ENCODE measurements at regions of chr6 and their contacts with region 1.

Region 1: DNA sequence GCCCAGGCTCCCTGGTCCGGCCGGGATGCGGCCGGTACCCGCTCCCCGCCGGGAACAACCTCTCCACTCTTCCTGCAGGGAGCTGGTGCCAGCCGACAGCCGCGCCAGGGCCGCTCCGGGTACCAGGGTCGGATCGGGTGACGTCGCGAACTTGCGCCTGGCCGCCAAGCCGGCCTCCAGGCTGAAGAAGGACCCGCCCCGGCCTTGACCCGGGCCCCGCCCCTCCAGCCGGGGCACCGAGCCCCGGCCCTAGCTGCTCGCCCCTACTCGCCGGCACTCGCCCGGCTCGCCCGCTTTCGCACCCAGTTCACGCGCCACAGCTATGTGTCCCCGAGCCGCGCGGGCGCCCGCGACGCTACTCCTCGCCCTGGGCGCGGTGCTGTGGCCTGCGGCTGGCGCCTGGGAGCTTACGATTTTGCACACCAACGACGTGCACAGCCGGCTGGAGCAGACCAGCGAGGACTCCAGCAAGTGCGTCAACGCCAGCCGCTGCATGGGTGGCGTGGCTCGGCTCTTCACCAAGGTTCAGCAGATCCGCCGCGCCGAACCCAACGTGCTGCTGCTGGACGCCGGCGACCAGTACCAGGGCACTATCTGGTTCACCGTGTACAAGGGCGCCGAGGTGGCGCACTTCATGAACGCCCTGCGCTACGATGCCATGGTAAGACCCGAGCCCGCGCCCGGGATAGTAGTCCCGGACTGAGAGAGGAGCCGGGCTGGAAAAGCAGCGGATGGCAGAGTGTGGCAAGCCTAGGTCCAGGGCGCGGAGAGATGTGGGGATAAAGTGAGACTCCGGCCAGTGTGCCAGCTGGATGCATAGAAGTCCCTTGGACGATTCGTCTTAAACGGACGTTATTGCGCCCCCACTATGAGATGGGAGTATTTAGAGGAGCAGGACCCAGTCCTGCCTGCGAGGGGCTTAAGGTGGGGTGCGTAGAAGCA is at the start of gene NT5E:
- DNase-seq: peak; percentile 3 to 67 (median 57)
- H3K4me3 ChIP-seq: peak within 1 kb of the TSS; percentile 64
- H3K4me3 Mint-ChIP-seq: peak within 1 kb of the TSS; percentile 90 to 97 (median 95)
- H3K27ac ChIP-seq: peak within 1 kb of the TSS; percentile 58
- H3K27ac Mint-ChIP-seq: peak within 1 kb of the TSS; percentile 55 to 95 (median 90)
- H3K4me1 ChIP-seq: peaks cover 25% of the 10 kb centered on the region
- H3K4me1 Mint-ChIP-seq: peaks cover 54 to 72% (median 67%) of the 10 kb centered on the region in 3 donors
- H3K27me3 ChIP-seq: peaks cover 13% of the 10 kb centered on the region
- H3K27me3 Mint-ChIP-seq: peaks cover 28 to 38% of the 10 kb centered on the region in 2 donors
- total RNA-seq, gene NT5E: 14.8 to 15.4 TPM

Region 2: DNA sequence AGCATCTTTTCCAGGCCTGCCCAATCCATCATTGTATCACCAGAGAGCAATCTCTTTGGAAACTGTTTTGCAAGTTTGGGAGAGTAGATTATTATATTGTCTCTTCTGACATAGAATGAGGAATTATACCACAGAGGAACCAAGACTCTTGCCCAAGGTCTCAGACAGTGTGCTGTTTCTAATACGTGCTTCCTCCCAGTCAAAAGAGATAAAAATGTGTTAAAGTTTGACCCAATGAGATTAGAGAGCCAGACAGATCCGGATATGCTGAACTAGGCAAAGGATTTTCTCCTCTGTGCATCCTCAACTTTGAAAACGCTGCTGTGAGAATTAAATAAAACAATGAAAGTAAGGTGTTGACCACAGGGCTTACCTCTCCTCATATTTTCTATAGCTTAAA is 18.8 kb before region 1 on chr6:
- CTCF ChIA-PET with region 1: interaction called, 11 read pairs
- POLR2A ChIA-PET with region 1: no interaction called
- DNase-seq: no peak
- H3K4me3 ChIP-seq: no peak overlapping the region
- H3K4me3 Mint-ChIP-seq: no peak overlapping the region
- H3K27ac ChIP-seq: no peak overlapping the region
- H3K27ac Mint-ChIP-seq: peak overlapping the region in 2 of 8 donors; percentile 22 to 52
- H3K4me1 ChIP-seq: no peaks in the 10 kb centered on the region
- H3K4me1 Mint-ChIP-seq: peaks cover 0 to 7% (median 0%) of the 10 kb centered on the region in 3 donors
- H3K27me3 ChIP-seq: no peaks in the 10 kb centered on the region
- H3K27me3 Mint-ChIP-seq: peaks cover 2 to 5% of the 10 kb centered on the region in 2 donors

Region 3: GRCh38 chr6:85460921-85461797 is 11.1 kb after region 1 on chr6:
- CTCF ChIA-PET with region 1: interaction called, 25 read pairs
- POLR2A ChIA-PET with region 1: interaction called, 27 read pairs
- DNase-seq: peak; percentile 8 to 70 (median 56)
- H3K4me3 ChIP-seq: no peak overlapping the region
- H3K4me3 Mint-ChIP-seq: peak overlapping the region; percentile 5 to 82 (median 65)
- H3K27ac ChIP-seq: peak overlapping the region; percentile 18
- H3K27ac Mint-ChIP-seq: peak overlapping the region; percentile 77 to 97 (median 88)
- H3K4me1 ChIP-seq: peaks cover 43% of the 10 kb centered on the region
- H3K4me1 Mint-ChIP-seq: peaks cover 87 to 100% (median 99%) of the 10 kb centered on the region in 3 donors
- H3K27me3 ChIP-seq: no peaks in the 10 kb centered on the region
- H3K27me3 Mint-ChIP-seq: peaks cover 0 to 4% of the 10 kb centered on the region in 2 donors

Region 4: GRCh38 chr6:85498596-85499258 is 48.6 kb after region 1 on chr6:
- CTCF ChIA-PET with region 1: no interaction called
- POLR2A ChIA-PET with region 1: no interaction called
- DNase-seq: peak in 1 of 5 donors; percentile 14
- H3K4me3 ChIP-seq: no peak overlapping the region
- H3K4me3 Mint-ChIP-seq: peak overlapping the region in 2 of 7 donors; percentile 0 to 49
- H3K27ac ChIP-seq: no peak overlapping the region
- H3K27ac Mint-ChIP-seq: peak overlapping the region in 1 of 8 donors; percentile 70
- H3K4me1 ChIP-seq: peaks cover 5% of the 10 kb centered on the region
- H3K4me1 Mint-ChIP-seq: peaks cover 25 to 32% (median 29%) of the 10 kb centered on the region in 3 donors
- H3K27me3 ChIP-seq: no peaks in the 10 kb centered on the region
- H3K27me3 Mint-ChIP-seq: no peaks in the 10 kb centered on the region

Region 5: GRCh38 chr6:85642774-85643536 is 192.9 kb after region 1 on chr6 and contains the start of gene SYNCRIP:
- CTCF ChIA-PET with region 1: no interaction called
- POLR2A ChIA-PET with region 1: interaction called, 14 read pairs
- DNase-seq: peak; percentile 97 to 99 (median 98)
- H3K4me3 ChIP-seq: peak within 1 kb of the TSS; percentile 92
- H3K4me3 Mint-ChIP-seq: peak within 1 kb of the TSS; percentile 93 to 96 (median 95)
- H3K27ac ChIP-seq: peak within 1 kb of the TSS; percentile 96
- H3K27ac Mint-ChIP-seq: peak within 1 kb of the TSS; percentile 96 to 99 (median 99)
- H3K4me1 ChIP-seq: peaks cover 31% of the 10 kb centered on the region
- H3K4me1 Mint-ChIP-seq: peaks cover 49 to 52% (median 50%) of the 10 kb centered on the region in 3 donors
- H3K27me3 ChIP-seq: no peaks in the 10 kb centered on the region
- H3K27me3 Mint-ChIP-seq: peaks cover 0 to 3% of the 10 kb centered on the region in 2 donors
- total RNA-seq, gene SYNCRIP: 247 to 249 TPM

Measured in CD8-positive, alpha-beta memory T cell (primary cell).